Pancreas (tissue), 10 donors: ENCODE measurements at regions of chr5 and their contacts with region 1.

Region 1: GRCh38 chr5:132489871-132490485 is 595 bp downstream of the IRF1 start:
- DNase-seq: peak; percentile 57 to 88 (median 76)
- ATAC-seq: peak; percentile 22 to 51 (median 29)
- H3K4me3 ChIP-seq: peak overlapping the region; percentile 58 to 89 (median 76)
- H3K27ac ChIP-seq: peak overlapping the region; percentile 83 to 97 (median 94)
- H3K4me1 ChIP-seq: peaks cover 0 to 27% (median 26%) of the 10 kb centered on the region in 3 donors
- H3K27me3 ChIP-seq: no peaks in the 10 kb centered on the region
- CTCF ChIP-seq: no peak

Region 2: GRCh38 chr5:132301344-132302271 is 188.4 kb before region 1 on chr5:
- intact Hi-C with region 1: no loop called
- DNase-seq: no peak
- ATAC-seq: peak; percentile 55 to 88 (median 75)
- H3K4me3 ChIP-seq: no peak overlapping the region
- H3K27ac ChIP-seq: peak overlapping the region in 2 of 4 donors; percentile 28 to 31
- H3K4me1 ChIP-seq: no peaks in the 10 kb centered on the region
- H3K27me3 ChIP-seq: no peaks in the 10 kb centered on the region
- CTCF ChIP-seq: no peak

Region 3: GRCh38 chr5:132419502-132420468 is 70.2 kb before region 1 on chr5:
- intact Hi-C with region 1: loop called in 1 of 3 experiments (anchors 5 kb)
- DNase-seq: peak; percentile 54 to 78 (median 68)
- ATAC-seq: peak; percentile 62 to 88 (median 84)
- H3K4me3 ChIP-seq: no peak overlapping the region
- H3K27ac ChIP-seq: peak overlapping the region in 1 of 4 donors; percentile 37
- H3K4me1 ChIP-seq: peaks cover 16 to 36% (median 35%) of the 10 kb centered on the region in 3 donors
- H3K27me3 ChIP-seq: no peaks in the 10 kb centered on the region
- CTCF ChIP-seq: peak; percentile 60 to 79 (median 62)